ENCODE measurements at regions of chr2 and their contacts with region 1.

Region 1: GRCh38 chr2:47334356-47335136 is 68.4 kb upstream of the MSH2 start:
- DNase-seq: peak; percentile 51
- H3K4me3 ChIP-seq: no peak overlapping the region
- H3K27ac ChIP-seq: no peak overlapping the region
- H3K4me1 ChIP-seq: peaks cover 7% of the 10 kb centered on the region
- H3K27me3 ChIP-seq: no peaks in the 10 kb centered on the region
- CTCF ChIP-seq: no peak

Region 2: DNA sequence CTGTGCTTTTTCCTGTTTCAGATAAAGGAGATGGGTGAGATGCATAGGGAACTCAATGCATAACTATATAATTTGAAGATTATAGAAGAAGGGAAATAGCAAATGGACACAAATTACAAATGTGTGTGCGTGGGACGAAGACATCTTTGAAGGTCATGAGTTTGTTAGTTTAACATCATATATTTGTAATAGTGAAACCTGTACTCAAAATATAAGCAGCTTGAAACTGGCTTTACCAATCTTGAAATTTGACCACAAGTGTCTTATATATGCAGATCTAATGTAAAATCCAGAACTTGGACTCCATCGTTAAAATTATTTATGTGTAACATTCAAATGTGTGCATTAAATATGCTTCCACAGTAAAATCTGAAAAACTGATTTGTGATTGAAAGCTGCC is 52.0 kb after region 1 on chr2:
- CTCF ChIA-PET with region 1: interaction called, 86 read pairs
- POLR2A ChIA-PET with region 1: interaction called, 7 read pairs
- intact Hi-C with region 1: loop called (anchors 1 kb)
- DNase-seq: no peak
- H3K4me3 ChIP-seq: no peak overlapping the region
- H3K27ac ChIP-seq: no peak overlapping the region
- H3K4me1 ChIP-seq: no peaks in the 10 kb centered on the region
- H3K27me3 ChIP-seq: no peaks in the 10 kb centered on the region
- CTCF ChIP-seq: no peak